H1 (cell line): ENCODE measurements at regions of chr14 and their contacts with region 1.

Region 1: GRCh38 chr14:51167587-51168214 is 72.3 kb upstream of the TMX1 start:
- DNase-seq: no peak
- H3K4me3 ChIP-seq: no peak overlapping the region
- H3K27ac ChIP-seq: no peak overlapping the region
- H3K4me1 ChIP-seq: peaks cover 0 to 3% (median 1%) of the 10 kb centered on the region in 4 experiments; a peak in 1 of 7 replicates
- H3K27me3 ChIP-seq: no peaks in the 10 kb centered on the region
- CTCF ChIP-seq: no peak
- EP300 ChIP-seq: no peak
- POLR2A ChIP-seq: no peak
- RAD21 ChIP-seq: no peak

Region 2: DNA sequence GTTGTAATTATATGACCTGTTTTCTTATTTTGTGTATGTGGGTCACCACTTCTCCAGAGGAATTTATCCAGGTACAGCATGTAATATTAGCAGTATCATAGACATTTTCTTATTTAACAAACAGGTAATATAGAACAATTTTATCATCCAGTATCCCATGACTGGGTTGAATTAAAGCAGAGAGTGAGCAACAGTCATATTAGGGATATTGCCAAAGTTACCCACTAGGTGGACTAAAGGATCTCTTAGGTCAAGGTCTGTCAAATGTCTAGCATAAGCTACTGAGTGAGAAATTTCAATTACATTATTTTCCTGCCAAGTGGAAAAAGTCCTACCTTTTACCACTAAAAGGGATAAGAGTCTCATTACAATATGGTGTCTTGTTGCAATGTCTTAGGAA is 10.7 kb before region 1 on chr14:
- CTCF ChIA-PET with region 1: interaction called, 15 read pairs
- POLR2A ChIA-PET with region 1: no interaction called
- DNase-seq: no peak
- H3K4me3 ChIP-seq: no peak overlapping the region
- H3K27ac ChIP-seq: no peak overlapping the region
- H3K4me1 ChIP-seq: no peaks in the 10 kb centered on the region
- H3K27me3 ChIP-seq: no peaks in the 10 kb centered on the region
- CTCF ChIP-seq: peak in 2 of 3 experiments; percentile 40 to 63; a peak in 2 of 4 replicates
- EP300 ChIP-seq: no peak
- POLR2A ChIP-seq: no peak
- RAD21 ChIP-seq: peak; percentile 71 to 79

Region 3: DNA sequence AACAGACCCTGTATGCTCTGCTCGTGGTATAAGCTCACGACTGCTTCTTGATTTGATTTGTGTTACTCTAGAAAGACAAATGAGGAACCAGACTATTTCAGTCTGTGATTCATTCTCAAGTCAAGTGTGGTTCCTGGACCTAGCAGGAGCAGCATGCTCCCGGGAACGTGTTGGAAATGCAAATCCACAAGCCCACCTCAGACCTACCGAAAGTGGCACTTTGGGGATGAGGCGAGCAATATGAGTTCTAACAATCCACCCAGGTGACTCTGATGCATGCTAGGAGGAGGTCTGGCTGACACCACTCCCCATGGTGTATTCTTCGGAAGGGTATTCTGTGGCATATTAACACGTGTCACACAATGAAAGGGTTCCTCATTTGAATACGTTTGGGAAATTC is 12.9 kb after region 1 on chr14:
- CTCF ChIA-PET with region 1: no interaction called
- POLR2A ChIA-PET with region 1: no interaction called
- DNase-seq: no peak
- H3K4me3 ChIP-seq: no peak overlapping the region
- H3K27ac ChIP-seq: no peak overlapping the region
- H3K4me1 ChIP-seq: peaks cover 0 to 3% (median 0%) of the 10 kb centered on the region in 4 experiments; a peak in 1 of 7 replicates
- H3K27me3 ChIP-seq: no peaks in the 10 kb centered on the region
- CTCF ChIP-seq: no peak
- EP300 ChIP-seq: no peak
- POLR2A ChIP-seq: no peak
- RAD21 ChIP-seq: no peak

Region 4: GRCh38 chr14:51410897-51411296 is 243.2 kb after region 1 on chr14:
- CTCF ChIA-PET with region 1: no interaction called
- POLR2A ChIA-PET with region 1: no interaction called
- DNase-seq: no peak
- H3K4me3 ChIP-seq: no peak overlapping the region
- H3K27ac ChIP-seq: no peak overlapping the region
- H3K4me1 ChIP-seq: peaks cover 0 to 5% (median 2%) of the 10 kb centered on the region in 4 experiments; a peak in 2 of 7 replicates
- H3K27me3 ChIP-seq: no peaks in the 10 kb centered on the region
- CTCF ChIP-seq: no peak
- EP300 ChIP-seq: no peak
- POLR2A ChIP-seq: no peak
- RAD21 ChIP-seq: no peak